Heart left ventricle (tissue), 16 donors: ENCODE measurements at regions of chr15 and their contacts with region 1.

Region 1: GRCh38 chr15:99507504-99508310 is 58.1 kb upstream of the MEF2A start:
- DNase-seq: peak; percentile 78 to 87 (median 81)
- ATAC-seq: peak; percentile 86 to 91 (median 88)
- H3K4me3 ChIP-seq: peak overlapping the region in 5 of 12 donors; percentile 2 to 20 (median 13)
- H3K27ac ChIP-seq: peak overlapping the region; percentile 19 to 91 (median 80)
- H3K4me1 ChIP-seq: peaks cover 3 to 94% (median 45%) of the 10 kb centered on the region in 12 donors
- H3K27me3 ChIP-seq: no peaks in the 10 kb centered on the region
- CTCF ChIP-seq: no peak
- POLR2A ChIP-seq: no peak

Region 2: GRCh38 chr15:98827217-98827616 is 680.5 kb before region 1 on chr15:
- intact Hi-C with region 1: no loop called
- DNase-seq: no peak
- ATAC-seq: no peak
- H3K4me3 ChIP-seq: no peak overlapping the region
- H3K27ac ChIP-seq: no peak overlapping the region
- H3K4me1 ChIP-seq: peaks cover 0 to 25% (median 10%) of the 10 kb centered on the region in 12 donors
- H3K27me3 ChIP-seq: no peaks in the 10 kb centered on the region
- CTCF ChIP-seq: no peak
- POLR2A ChIP-seq: no peak

Region 3: GRCh38 chr15:99359769-99360168 is 147.9 kb before region 1 on chr15:
- intact Hi-C with region 1: no loop called
- DNase-seq: no peak
- ATAC-seq: no peak
- H3K4me3 ChIP-seq: no peak overlapping the region
- H3K27ac ChIP-seq: no peak overlapping the region
- H3K4me1 ChIP-seq: no peaks in the 10 kb centered on the region
- H3K27me3 ChIP-seq: no peaks in the 10 kb centered on the region
- CTCF ChIP-seq: no peak
- POLR2A ChIP-seq: no peak

Region 4: DNA sequence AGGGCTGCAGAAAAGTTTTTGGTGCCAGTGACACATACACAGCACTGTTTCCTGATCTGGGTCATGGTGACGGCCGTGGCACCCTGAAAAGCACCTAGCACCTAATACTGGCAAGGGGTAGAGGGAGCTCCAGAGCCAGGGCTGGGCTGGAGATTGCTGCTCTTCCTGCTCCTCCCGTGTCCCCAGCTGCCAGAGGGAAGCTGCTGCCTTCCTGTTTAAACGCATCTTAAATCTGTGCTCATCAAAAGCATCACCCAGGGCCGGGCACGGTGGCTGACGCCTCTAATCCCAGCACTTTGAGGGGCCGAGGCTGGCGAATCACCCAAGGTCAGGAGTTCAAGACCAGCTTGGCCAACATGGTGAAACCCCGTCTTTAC is 98.6 kb before region 1 on chr15:
- intact Hi-C with region 1: loop called in 2 of 10 experiments (anchors 5 to 10 kb)
- DNase-seq: peak; percentile 71 to 82 (median 79)
- ATAC-seq: peak; percentile 87 to 94 (median 88)
- H3K4me3 ChIP-seq: no peak overlapping the region
- H3K27ac ChIP-seq: peak overlapping the region in 10 of 12 donors; percentile 6 to 71 (median 42)
- H3K4me1 ChIP-seq: peaks cover 0 to 26% (median 22%) of the 10 kb centered on the region in 12 donors
- H3K27me3 ChIP-seq: no peaks in the 10 kb centered on the region
- CTCF ChIP-seq: peak; percentile 51 to 74 (median 66)
- POLR2A ChIP-seq: no peak

Region 5: GRCh38 chr15:99473981-99474906 is 33.5 kb before region 1 on chr15:
- intact Hi-C with region 1: loop called in 1 of 10 experiments (anchors 5 kb)
- DNase-seq: peak; percentile 74 to 87 (median 76)
- ATAC-seq: peak; percentile 68 to 90 (median 84)
- H3K4me3 ChIP-seq: peak overlapping the region in 5 of 12 donors; percentile 3 to 37 (median 32)
- H3K27ac ChIP-seq: peak overlapping the region; percentile 59 to 88 (median 78)
- H3K4me1 ChIP-seq: peaks cover 0 to 66% (median 54%) of the 10 kb centered on the region in 12 donors
- H3K27me3 ChIP-seq: no peaks in the 10 kb centered on the region
- CTCF ChIP-seq: no peak
- POLR2A ChIP-seq: peak in 1 of 2 donors; percentile 17

Region 6: GRCh38 chr15:99486371-99487336 is 21.1 kb before region 1 on chr15:
- intact Hi-C with region 1: loop called in 1 of 10 experiments (anchors 2 kb)
- DNase-seq: peak; percentile 84 to 94 (median 93)
- ATAC-seq: peak; percentile 84 to 94 (median 93)
- H3K4me3 ChIP-seq: peak overlapping the region in 10 of 12 donors; percentile 13 to 56 (median 46)
- H3K27ac ChIP-seq: peak overlapping the region; percentile 20 to 91 (median 82)
- H3K4me1 ChIP-seq: peaks cover 0 to 35% (median 27%) of the 10 kb centered on the region in 12 donors
- H3K27me3 ChIP-seq: no peaks in the 10 kb centered on the region
- CTCF ChIP-seq: no peak
- POLR2A ChIP-seq: peak in 1 of 2 donors; percentile 34